ENCODE measurements at regions of chr10 and their contacts with region 1.

Region 1: DNA sequence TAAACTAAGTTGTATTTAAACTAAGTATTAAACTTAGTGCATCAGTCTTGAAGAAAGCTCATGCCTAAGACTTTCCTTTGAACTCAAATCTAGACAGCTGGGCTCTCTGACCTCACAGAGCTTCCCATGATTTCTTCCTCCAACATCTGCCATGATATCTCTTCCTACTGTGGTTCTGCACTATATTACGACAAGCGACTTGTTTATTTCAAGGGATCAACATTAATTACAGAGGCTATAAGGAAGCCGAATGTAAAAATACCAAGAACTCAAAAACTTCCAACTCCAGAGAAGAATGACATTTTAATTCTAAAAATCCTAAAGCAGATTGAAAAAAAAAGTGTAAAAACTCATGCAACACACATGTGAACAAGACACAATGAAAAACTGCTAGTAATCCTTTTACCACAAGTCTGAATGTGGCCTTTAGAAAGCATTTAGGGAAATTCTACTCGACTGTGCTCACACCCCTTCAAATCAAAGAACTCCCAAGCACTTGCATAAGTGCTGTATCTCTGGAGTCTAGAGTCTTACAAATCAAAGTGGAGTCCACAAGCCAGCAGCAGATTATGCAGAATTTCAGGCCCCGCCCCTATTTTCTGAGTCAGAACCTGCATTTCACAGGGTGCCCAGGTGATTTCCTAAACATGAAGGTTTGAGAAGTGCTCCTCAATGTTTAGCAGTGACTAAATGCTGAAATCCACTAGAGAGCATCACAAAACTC is 22.7 kb upstream of the WASHC2A start:
- DNase-seq: no peak
- H3K4me3 Mint-ChIP-seq: no peak overlapping the region
- H3K27ac Mint-ChIP-seq: no peak overlapping the region
- H3K4me1 Mint-ChIP-seq: no peaks in the 10 kb centered on the region
- H3K27me3 Mint-ChIP-seq: no peaks in the 10 kb centered on the region

Region 2: DNA sequence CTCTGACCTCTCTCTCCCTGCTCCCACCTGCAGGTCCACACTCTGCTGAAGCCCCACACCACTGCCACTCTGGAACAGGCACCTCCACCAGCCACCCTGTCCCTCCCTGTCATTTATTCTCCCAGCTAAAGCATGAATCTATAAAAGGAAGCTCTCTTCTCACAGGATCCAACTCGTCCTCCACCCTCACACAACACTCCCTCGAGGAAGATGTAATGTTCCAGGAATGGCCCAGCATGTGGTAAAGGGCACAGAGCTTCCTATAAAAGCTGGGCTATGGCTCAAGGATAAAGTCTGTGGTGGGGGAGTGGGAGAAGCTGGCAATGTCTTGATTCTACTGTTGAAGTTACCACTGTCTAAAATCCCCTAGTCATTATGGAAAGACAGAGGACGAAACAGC is 573.6 kb before region 1 on chr10:
- CTCF ChIA-PET with region 1: no interaction called
- POLR2A ChIA-PET with region 1: interaction called, 10 read pairs
- DNase-seq: no peak
- H3K4me3 Mint-ChIP-seq: no peak overlapping the region
- H3K27ac Mint-ChIP-seq: no peak overlapping the region
- H3K4me1 Mint-ChIP-seq: no peaks in the 10 kb centered on the region
- H3K27me3 Mint-ChIP-seq: no peaks in the 10 kb centered on the region

Measured in activated CD4-positive, alpha-beta T cell treated with anti-CD3 and anti-CD28 coated beads, Interleukin-2, amount 10 ng/mL, durations not matched to agents 7 days and 5 days (primary cell).